ENCODE measurements at regions of chr11 and their contacts with region 1.

Region 1: DNA sequence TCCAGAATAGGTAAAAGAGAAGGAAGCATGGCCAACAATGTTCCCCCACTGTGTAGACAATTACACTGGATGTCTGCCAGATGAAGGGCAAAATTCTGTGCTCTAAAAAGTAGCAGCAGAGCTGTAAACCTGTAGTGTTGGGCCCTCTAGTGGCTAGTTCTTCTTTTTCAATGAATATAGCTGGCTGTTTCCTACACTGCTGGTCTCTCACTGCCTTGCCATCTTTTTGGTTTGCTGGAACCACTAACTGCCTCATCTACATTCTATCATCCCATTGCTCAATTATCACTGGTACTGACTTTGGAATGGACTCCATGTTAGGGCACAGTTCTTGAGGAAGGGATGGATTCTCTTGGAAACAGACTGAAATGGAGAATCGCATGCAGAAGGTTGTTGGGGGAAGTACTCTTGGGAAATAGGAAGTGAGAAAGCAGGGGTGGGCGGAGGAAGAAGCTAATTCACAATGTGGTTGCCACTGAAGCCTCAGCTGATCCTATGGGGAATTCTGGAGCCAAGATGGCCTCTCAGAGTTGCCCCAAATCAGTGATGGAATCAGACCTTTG is 17.9 kb downstream of the KCNE3 start:
- DNase-seq: peak; percentile 43 to 52
- H3K4me3 ChIP-seq: no peak overlapping the region
- H3K27ac ChIP-seq: no peak overlapping the region
- H3K4me1 ChIP-seq: no peaks in the 10 kb centered on the region
- H3K27me3 ChIP-seq: no peaks in the 10 kb centered on the region
- CTCF ChIP-seq: peak; percentile 92

Region 2: DNA sequence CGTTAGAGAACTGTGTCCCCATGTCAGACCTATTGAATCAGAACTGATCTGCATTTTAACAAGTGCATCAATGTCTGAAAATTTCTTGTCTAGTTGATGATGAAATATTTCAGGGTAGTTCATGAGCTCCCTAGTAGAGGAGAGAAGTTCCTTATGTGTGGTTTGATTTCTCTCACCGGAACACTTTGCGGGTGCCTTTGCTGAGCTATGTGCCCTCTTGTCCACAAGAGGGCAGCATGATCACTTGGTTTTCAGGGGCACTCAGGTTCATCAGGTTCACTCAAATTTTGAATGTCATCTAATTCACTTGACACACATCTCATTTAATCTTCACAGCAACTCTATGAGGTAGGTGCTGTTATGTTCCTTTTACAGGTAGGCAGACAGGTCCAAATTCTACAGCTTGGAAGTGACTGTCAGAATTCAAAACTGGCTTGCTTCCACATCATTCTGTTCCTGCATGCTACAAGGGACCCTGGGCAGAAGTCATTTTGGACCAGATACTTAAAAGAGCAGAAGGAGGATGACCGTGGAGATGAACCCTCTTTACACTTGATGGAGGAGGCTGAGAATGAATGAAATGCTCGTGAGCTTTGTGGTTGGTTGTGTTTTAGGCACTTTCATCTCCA is 193.6 kb before region 1 on chr11:
- CTCF ChIA-PET with region 1: interaction called, 50 read pairs
- POLR2A ChIA-PET with region 1: interaction called, 3 read pairs
- intact Hi-C with region 1: loop called (anchors 1 kb)
- DNase-seq: peak; percentile 52 to 60
- H3K4me3 ChIP-seq: no peak overlapping the region
- H3K27ac ChIP-seq: no peak overlapping the region
- H3K4me1 ChIP-seq: no peaks in the 10 kb centered on the region
- H3K27me3 ChIP-seq: no peaks in the 10 kb centered on the region
- CTCF ChIP-seq: peak; percentile 97

Region 3: GRCh38 chr11:74437441-74438042 is 11.9 kb before region 1 on chr11:
- CTCF ChIA-PET with region 1: interaction called, 12 read pairs
- POLR2A ChIA-PET with region 1: interaction called, 4 read pairs
- intact Hi-C with region 1: no loop called
- DNase-seq: no peak
- H3K4me3 ChIP-seq: no peak overlapping the region
- H3K27ac ChIP-seq: no peak overlapping the region
- H3K4me1 ChIP-seq: peaks cover 2% of the 10 kb centered on the region; the same call in 1 of the 2 replicates
- H3K27me3 ChIP-seq: no peaks in the 10 kb centered on the region
- CTCF ChIP-seq: no peak

Region 4: DNA sequence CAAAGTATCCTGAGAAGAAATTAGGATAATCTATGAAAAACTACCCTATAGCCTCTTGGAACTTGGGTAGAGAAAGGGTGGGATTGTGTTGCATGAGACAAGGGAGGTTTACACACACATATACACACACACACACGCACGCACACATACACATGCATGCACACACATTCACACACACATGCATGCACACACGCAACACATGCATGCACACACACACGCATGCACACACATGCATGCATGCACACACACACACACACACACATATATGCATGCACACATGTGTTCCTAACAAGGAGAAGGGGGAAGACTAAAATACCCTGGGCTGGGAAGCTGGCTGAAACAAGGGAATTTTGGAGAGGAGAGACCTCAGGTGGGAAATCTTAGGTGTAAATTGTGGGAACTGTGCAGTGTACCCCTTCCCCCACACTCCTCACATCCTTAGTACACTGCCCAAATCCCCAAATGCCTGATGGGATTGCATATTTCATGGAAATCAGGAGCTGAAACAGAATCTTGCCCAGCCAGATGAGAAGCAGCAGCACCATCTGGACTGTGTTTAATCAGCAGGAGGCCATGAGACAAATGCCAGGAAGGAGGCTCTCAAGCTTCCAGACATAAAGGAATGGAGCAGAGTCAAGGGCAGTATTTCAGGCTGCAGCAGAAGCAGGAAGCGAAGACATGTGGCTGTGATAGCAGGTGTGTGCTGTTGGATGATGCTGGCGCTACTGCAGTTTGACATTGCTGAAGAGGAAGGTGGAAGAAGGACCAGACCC is 128.4 kb after region 1 on chr11:
- CTCF ChIA-PET with region 1: interaction called, 10 read pairs
- POLR2A ChIA-PET with region 1: no interaction called
- intact Hi-C with region 1: no loop called
- DNase-seq: no peak
- H3K4me3 ChIP-seq: no peak overlapping the region
- H3K27ac ChIP-seq: no peak overlapping the region
- H3K4me1 ChIP-seq: peaks cover 13% of the 10 kb centered on the region
- H3K27me3 ChIP-seq: no peaks in the 10 kb centered on the region
- CTCF ChIP-seq: no peak